KBM-7 (cell line): ENCODE measurements at regions of chr20 and their contacts with region 1.

Region 1: DNA sequence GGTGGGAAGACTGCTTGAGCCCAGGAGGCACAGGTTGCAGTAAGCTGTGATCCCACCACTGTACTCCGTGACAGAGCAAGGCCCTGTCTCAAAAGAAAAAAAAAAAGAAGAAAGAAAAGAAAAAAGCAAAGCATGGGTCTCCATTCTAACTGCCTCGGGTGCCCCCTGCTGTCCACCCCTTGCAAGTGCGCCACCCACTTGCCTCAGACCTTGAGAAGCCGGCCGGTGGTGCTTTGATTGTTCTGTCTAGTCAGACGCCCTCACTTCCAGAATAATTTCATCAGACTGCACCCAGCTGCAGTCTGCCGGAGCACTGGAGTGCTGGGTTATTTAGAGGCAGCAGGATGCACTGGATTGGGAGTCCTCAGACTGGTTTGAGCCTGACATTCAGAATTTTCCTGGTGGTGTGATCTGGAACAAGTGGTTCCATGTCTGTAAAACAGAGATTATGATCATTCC is 17.6 kb upstream of the TM9SF4 start:
- DNase-seq: peak; percentile 92

Region 2: DNA sequence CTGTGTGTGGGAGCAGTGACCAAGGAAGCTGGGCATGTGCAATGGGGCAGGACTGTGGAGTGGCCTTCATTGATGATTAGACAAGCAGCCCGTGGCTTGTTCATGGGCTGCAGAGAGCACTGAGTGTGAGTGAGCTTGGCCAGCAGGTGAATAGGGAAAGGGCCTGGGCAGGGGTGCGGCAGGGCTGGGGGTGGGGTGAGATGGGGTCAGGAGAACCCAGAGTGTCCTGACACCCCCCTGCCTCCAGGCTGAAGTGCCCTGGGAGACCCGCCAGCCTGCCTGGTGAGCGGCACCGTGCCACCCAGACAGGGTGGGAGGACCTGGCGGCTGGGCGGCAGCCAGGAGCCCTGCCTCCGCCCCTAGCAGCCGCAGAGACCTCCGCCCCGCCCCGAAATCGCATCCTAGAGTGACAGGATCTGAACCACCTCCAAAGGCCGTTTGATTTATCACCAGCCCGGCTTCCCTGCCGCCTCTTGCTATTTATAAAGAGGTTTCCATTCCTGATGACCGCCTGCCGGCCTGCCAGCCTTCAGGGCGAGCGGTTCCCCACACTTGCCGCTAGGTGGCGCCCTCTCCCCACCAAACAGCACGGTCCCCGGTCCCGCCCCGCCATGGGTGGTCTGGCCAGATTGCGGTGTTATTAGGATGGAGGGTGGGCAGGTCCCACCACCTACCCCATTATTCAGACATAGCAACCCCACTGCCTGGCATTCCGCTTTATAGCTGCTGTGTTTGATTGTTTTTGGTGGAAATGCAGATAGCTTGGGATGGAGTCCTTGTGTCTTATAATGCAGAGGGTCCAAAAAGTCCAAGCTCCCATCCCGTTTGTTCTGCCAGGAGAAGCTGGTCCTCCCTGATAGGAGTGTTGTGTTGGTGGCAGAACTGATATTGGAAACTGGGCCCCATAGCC is 269.2 kb before region 1 on chr20:
- in situ Hi-C with region 1: loop called (anchors 10 kb)
- DNase-seq: peak; percentile 76

Region 3: DNA sequence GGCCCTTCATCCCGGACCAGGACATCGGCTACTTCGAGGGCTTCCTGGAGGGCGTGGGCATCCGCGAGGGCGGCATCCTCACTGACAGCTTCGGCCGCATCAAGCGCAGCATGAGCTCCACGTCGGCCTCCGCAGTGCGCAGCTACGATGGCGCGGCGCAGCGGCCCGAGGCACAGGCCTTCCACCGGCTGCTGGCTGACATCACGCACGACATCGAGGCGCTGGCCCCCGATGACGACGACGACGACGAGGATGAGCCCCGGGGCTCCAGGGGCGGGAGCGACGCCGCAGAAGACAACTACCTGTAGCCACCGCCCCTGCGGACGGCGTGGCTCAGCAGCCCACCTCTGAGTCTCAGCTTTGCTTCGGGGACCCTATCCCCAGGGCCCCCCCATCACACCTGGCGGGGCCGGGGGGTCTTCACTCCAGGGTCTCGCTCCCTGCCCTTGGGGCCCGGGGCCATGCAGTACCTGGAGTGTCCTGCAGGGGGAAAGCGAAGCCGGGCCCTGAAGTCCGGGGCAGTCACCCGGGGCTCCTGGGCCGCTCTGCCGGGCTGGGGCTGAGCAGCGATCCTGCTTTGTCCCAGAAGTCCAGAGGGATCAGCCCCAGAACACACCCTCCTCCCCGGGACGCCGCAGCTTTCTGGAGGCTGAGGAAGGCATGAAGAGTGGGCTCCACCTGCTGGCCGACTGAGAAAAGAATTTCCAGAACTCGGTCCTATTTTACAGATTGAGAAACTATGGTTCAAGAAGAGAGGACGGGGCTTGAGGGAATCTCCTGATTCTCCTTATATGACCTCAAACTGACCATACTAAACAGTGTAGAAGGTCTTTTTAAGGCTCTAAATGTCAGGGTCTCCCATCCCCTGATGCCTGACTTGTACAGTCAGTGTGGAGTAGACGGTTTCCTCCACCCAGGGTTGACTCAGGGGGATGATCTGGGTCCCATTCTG is 60.6 kb before region 1 on chr20:
- in situ Hi-C with region 1: loop called (anchors 10 kb)
- DNase-seq: peak; percentile 76